B cell (primary cell): ENCODE measurements at regions of chr18 and their contacts with region 1.

Region 1: DNA sequence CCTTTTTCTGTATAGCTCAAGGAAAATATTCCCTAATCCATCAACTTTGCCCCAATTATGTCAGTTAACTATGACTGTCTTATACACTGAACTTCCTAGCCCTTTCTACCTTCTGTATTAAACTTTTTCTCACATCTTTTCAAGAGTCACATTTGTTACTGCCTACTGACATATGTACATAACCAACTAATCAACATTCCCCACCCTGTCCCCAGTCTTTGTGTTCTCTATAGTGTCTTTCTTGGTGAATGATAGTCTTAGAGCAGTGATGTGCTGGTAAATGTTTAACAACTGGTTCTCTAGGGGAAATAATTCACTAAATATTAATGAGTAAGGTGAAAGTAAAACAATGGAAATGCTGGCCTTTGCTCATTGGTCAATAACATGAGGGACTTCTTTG is 61.6 kb upstream of the PIK3C3 start:
- DNase-seq: no peak
- ATAC-seq: no peak
- H3K4me3 ChIP-seq: no peak overlapping the region
- H3K4me3 Mint-ChIP-seq: no peak overlapping the region
- H3K27ac ChIP-seq: no peak overlapping the region
- H3K27ac Mint-ChIP-seq: no peak overlapping the region
- H3K4me1 ChIP-seq: no peaks in the 10 kb centered on the region
- H3K4me1 Mint-ChIP-seq: no peaks in the 10 kb centered on the region
- H3K27me3 ChIP-seq: no peaks in the 10 kb centered on the region
- H3K27me3 Mint-ChIP-seq: peaks cover 6% of the 10 kb centered on the region
- CTCF ChIP-seq: no peak

Region 2: DNA sequence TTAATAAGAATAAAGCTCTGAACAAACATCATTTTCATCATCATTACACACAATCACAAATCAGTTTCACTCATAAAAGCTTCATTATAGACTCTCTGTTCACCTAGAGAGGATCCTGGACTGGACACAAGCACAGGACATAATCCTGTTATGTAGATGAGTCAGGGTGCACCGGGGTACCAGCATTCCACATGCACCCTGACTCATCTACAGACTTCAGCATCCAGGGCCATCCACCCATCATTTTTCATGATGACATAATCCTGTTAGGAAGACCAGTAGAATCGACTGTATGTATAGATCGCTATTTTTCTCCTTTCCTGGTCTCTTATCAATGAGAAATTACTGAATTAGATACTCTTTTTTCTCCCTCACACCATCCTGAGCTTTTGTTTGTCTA is 12.1 kb before region 1 on chr18:
- CTCF ChIA-PET with region 1: no interaction called
- POLR2A ChIA-PET with region 1: no interaction called
- intact Hi-C with region 1: no loop called
- DNase-seq: no peak
- ATAC-seq: no peak
- H3K4me3 ChIP-seq: no peak overlapping the region
- H3K4me3 Mint-ChIP-seq: no peak overlapping the region
- H3K27ac ChIP-seq: no peak overlapping the region
- H3K27ac Mint-ChIP-seq: no peak overlapping the region
- H3K4me1 ChIP-seq: no peaks in the 10 kb centered on the region
- H3K4me1 Mint-ChIP-seq: no peaks in the 10 kb centered on the region
- H3K27me3 ChIP-seq: no peaks in the 10 kb centered on the region
- H3K27me3 Mint-ChIP-seq: no peaks in the 10 kb centered on the region
- CTCF ChIP-seq: no peak

Region 3: GRCh38 chr18:41905786-41906527 is 12.5 kb after region 1 on chr18:
- CTCF ChIA-PET with region 1: interaction called, 22 read pairs
- POLR2A ChIA-PET with region 1: no interaction called
- intact Hi-C with region 1: no loop called
- DNase-seq: no peak
- ATAC-seq: no peak
- H3K4me3 ChIP-seq: no peak overlapping the region
- H3K4me3 Mint-ChIP-seq: no peak overlapping the region
- H3K27ac ChIP-seq: no peak overlapping the region
- H3K27ac Mint-ChIP-seq: no peak overlapping the region
- H3K4me1 ChIP-seq: no peaks in the 10 kb centered on the region
- H3K4me1 Mint-ChIP-seq: peaks cover 4% of the 10 kb centered on the region
- H3K27me3 ChIP-seq: no peaks in the 10 kb centered on the region
- H3K27me3 Mint-ChIP-seq: peaks cover 11% of the 10 kb centered on the region
- CTCF ChIP-seq: no peak